ENCODE measurements at regions of chr19 and their contacts with region 1.

Region 1: DNA sequence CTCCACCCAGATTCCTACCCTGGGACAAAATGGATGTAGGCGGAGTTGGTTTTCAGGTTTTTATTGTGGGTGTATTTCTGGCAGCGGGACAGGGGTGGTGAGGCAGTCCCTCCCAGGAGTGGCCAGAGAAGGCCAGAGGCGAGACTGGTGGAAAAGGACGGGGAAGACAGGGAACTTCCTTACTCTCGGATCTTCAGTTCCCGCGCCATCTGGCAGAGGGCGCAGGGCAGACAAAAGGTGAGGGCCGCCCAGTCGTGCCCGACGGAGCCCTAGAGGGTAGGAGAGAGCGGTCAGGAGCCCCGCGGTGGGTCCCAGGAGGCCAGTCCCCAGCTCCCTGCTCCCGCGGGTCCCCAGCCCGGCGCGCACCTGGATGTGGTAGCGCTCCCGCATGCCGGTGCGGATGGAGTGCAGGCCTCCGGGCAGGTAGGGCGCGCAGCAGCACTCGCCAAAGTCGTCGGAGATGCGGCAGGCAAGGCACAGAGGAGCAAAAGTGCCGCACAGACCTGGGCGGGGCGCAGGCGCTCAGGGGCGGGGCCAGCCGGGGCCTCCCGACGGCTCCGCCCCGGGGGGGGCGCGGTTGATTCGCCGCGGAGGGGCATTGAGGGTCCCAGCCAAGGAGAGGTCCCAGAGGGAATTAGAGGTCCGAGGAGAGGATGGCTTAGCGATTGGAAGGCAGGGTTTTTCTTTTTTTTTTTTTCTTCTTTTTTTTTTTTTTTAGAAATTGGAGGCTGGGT is 3.0 kb downstream of the CNFN start:
- DNase-seq: peak; percentile 72
- H3K4me3 Mint-ChIP-seq: peak overlapping the region; percentile 66
- H3K27ac Mint-ChIP-seq: no peak overlapping the region
- H3K4me1 Mint-ChIP-seq: peaks cover 5% of the 10 kb centered on the region
- H3K27me3 Mint-ChIP-seq: peaks cover 37% of the 10 kb centered on the region

Region 2: GRCh38 chr19:42401365-42402303 is 14.5 kb after region 1 on chr19:
- CTCF ChIA-PET with region 1: interaction called, 3 read pairs
- intact Hi-C with region 1: loop called (anchors 1 kb)
- DNase-seq: peak; percentile 82
- H3K4me3 Mint-ChIP-seq: peak overlapping the region; percentile 71
- H3K27ac Mint-ChIP-seq: no peak overlapping the region
- H3K4me1 Mint-ChIP-seq: peaks cover 33% of the 10 kb centered on the region
- H3K27me3 Mint-ChIP-seq: no peaks in the 10 kb centered on the region

Region 3: GRCh38 chr19:42433503-42434260 is 46.5 kb after region 1 on chr19:
- CTCF ChIA-PET with region 1: interaction called, 3 read pairs
- intact Hi-C with region 1: loop called (anchors 1 kb)
- DNase-seq: peak; percentile 83
- H3K4me3 Mint-ChIP-seq: no peak overlapping the region
- H3K27ac Mint-ChIP-seq: no peak overlapping the region
- H3K4me1 Mint-ChIP-seq: peaks cover 6% of the 10 kb centered on the region
- H3K27me3 Mint-ChIP-seq: no peaks in the 10 kb centered on the region

Measured in activated naive CD4-positive, alpha-beta T cell treated with anti-CD3 and anti-CD28 coated beads for 36 hours (primary cell).